ENCODE measurements at regions of chr3 and their contacts with region 1.

Region 1: DNA sequence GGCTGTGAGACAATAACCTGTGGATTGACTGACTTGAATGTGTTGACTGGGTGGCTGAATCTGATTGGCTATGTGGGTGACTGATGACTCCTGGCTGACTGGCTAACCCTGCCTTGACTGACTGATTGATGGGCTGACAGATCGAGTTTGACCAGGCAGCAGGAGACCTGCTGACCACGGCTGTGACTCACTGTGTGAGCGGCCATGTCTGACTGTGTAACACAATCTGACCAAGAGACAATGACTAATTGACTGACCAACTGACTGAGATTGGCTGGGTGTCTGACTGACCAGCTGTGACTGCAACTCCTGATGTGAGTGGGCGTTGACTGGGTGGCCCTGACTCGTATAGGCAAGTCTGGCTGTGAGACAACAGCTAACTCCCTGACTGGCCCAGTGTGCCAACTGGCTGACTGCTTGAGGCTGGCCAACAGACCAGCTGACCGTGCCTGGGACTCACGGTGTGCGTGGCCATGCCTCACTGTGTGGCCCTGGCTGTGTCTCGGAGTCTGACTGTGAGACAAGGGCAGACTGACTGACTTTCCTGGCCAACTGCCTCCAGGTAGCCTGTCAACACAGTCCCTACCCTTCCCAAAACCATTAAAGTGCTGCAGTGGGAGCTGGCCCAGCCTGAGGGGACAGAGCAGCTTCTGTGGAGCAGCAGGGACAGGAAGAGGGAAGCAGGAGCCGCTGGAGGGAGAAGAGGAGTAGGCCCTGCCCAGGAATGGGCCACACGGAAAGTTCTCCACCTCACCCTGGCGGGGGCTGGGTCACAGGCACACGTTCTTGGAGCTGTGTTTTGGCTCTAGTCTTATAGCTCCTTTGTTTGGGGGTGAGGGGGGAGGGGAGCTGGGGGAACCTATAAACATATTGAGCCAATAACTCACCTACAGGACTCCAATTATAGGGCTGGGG is 508.9 kb downstream of the SHQ1 start:
- DNase-seq: no peak
- H3K4me3 Mint-ChIP-seq: no peak overlapping the region
- H3K27ac Mint-ChIP-seq: no peak overlapping the region
- H3K4me1 Mint-ChIP-seq: peaks cover 32% of the 10 kb centered on the region
- H3K27me3 Mint-ChIP-seq: no peaks in the 10 kb centered on the region

Region 2: DNA sequence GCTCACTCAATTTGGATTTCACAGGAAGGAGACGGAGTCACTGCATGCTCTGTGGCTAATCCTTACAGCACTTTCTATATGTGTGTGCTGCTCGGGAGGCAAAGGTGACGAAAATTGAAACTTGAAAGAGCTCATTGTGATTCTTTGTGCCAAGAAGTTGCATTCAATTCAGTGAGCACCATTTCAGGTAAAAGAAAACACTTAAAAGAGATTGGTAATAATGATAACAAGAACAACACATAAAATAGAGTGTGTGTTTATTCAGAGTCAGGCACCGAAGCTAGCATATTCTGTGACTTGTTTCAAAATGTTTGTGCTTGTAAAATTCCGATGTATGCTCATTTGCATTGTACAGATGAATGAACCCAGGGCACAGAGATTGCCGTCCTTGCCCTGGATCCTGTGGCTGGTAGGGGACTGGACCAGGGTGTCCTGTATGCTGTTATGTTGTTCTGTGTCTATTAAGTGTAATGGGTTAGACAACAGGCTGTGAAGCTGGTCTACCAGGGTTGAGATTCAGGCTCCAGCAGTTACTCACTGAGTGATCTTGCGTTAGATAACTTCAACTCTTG is 361.1 kb before region 1 on chr3:
- intact Hi-C with region 1: loop called (anchors 2 kb)
- DNase-seq: peak; percentile 76
- H3K4me3 Mint-ChIP-seq: peak overlapping the region; percentile 59
- H3K27ac Mint-ChIP-seq: peak overlapping the region; percentile 88
- H3K4me1 Mint-ChIP-seq: peaks cover 45% of the 10 kb centered on the region
- H3K27me3 Mint-ChIP-seq: no peaks in the 10 kb centered on the region

Region 3: GRCh38 chr3:72259755-72260587 is 79.4 kb before region 1 on chr3:
- intact Hi-C with region 1: loop called (anchors 5 kb)
- DNase-seq: no peak
- H3K4me3 Mint-ChIP-seq: no peak overlapping the region
- H3K27ac Mint-ChIP-seq: peak overlapping the region; percentile 56
- H3K4me1 Mint-ChIP-seq: peaks cover 25% of the 10 kb centered on the region
- H3K27me3 Mint-ChIP-seq: no peaks in the 10 kb centered on the region

Region 4: GRCh38 chr3:72447059-72447946 is 107.9 kb after region 1 on chr3:
- intact Hi-C with region 1: loop called (anchors 2 kb)
- DNase-seq: peak; percentile 99
- H3K4me3 Mint-ChIP-seq: peak overlapping the region; percentile 92
- H3K27ac Mint-ChIP-seq: peak overlapping the region; percentile 86
- H3K4me1 Mint-ChIP-seq: peaks cover 46% of the 10 kb centered on the region
- H3K27me3 Mint-ChIP-seq: peaks cover 4% of the 10 kb centered on the region

Region 5: DNA sequence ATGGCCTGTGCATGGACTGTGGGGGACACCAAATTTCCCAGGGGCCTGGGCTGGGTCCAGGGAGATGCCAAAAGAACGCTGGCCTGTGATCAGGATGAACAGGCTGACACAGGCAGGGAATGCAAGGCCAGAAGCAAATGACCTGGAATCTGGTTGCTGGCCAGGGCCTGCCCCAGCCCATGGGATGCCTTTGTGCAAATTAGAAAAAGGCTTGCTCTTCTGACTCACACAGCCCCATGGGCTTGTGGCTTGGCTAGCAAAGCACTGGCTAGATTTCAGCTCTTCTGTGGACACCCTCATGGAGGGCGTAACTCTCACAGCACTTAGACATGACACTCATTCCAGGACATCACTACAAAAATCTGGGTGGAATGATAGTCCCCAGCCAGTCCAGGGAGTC is 152.9 kb after region 1 on chr3:
- intact Hi-C with region 1: no loop called
- DNase-seq: no peak
- H3K4me3 Mint-ChIP-seq: no peak overlapping the region
- H3K27ac Mint-ChIP-seq: no peak overlapping the region
- H3K4me1 Mint-ChIP-seq: peaks cover 19% of the 10 kb centered on the region
- H3K27me3 Mint-ChIP-seq: no peaks in the 10 kb centered on the region

Region 6: GRCh38 chr3:72523429-72524151 is 184.2 kb after region 1 on chr3:
- intact Hi-C with region 1: loop called (anchors 2 kb)
- DNase-seq: no peak
- H3K4me3 Mint-ChIP-seq: no peak overlapping the region
- H3K27ac Mint-ChIP-seq: peak overlapping the region; percentile 91
- H3K4me1 Mint-ChIP-seq: peaks cover 36% of the 10 kb centered on the region
- H3K27me3 Mint-ChIP-seq: no peaks in the 10 kb centered on the region